Sciatic nerve (tissue), 2 donors: ENCODE measurements at regions of chr9 and their contacts with region 1.

Region 1: GRCh38 chr9:27333241-27334052 is 36.5 kb upstream of the EQTN start:
- DNase-seq: no peak
- ATAC-seq: peak; percentile 86

Region 2: DNA sequence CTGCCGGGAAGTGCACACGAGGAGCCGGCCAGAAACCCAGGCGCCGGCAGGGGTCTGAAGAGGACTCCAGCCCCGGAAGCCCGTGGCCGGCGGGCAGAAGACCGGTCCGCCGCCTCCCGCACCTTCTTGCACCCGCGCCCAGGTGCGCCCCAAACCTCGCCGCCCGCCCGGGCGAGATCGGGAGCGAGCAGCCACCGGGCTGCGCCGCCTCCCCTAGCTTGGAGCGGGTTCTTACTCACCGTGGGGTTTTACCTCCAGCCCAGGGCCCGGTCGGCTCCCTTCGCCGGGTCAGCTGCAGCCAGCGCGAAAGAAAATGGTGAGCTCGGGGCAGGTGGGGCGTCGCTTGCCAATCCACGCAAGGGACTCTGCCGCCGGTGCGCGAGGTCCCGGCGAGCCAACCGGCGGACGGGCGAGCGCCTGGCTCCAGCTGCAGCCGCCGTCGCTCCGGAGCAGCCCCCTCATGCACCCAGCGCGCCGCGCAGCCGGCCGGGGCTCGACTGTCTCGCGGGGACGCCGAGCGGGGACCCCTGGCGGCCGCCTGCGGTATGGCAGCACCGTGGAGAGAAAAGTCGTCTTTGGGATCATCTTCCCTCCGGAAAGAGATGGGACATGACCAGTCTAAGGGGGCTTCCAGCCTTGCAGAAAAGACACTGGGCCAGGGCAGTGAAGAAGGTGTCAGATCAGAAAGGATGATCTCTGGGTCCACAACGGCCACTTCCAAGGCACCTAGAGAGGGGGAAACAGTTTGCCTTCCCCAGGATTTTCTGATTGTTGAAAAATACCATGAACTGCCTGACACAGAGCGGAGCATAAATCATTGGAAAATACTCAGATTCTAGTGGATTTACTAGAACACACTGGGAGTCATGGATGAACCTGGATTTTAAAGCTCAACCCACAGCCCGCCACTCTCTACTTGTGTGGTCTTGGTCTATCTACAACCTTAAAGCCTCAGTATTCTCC is 196.2 kb after region 1 on chr9 and contains the start of gene MOB3B:
- intact Hi-C with region 1: loop called (anchors 10 kb)
- DNase-seq: peak; percentile 92
- ATAC-seq: peak; percentile 69
- total RNA-seq, gene MOB3B: 14.9 TPM